Cardiac septum (tissue), 1 donor: ENCODE measurements at regions of chr9 and their contacts with region 1.

Region 1: DNA sequence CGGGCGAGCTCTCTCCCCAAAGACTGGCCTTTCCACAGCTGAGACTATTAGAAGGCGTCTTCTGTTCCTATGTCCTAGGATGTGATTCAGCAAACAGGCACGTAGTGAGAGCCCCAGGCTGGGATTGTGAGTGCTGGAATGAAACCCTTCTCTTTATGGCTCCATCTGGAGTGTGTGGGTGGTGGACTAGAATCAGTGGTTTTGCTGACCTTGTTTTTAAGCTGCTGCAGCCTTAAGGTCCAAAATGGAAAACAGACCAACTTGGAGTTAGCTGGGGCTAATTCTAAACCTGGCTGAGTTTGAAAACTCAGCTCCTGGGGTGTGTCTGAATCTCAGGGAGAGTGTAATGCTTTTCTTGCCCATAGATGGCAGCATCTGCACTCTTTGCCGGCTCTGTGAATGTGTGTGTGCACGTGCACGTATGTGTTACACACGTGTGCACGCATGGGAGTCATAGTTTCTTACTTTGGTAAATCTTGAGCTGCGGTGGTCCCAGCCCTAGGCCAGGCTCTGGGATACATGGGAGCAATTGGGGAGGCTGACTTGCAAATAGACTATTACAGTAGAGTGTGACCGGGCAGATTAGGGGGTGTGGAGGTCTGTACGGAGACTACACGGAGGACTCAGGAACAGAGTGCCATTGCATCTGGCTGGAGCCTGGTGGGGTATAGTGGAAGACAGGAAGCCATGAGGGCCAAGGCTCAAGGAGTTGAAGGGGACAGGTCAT is 10.7 kb downstream of the GSN start:
- DNase-seq: peak; percentile 78

Region 2: GRCh38 chr9:121222524-121223171 is 56.0 kb before region 1 on chr9:
- intact Hi-C with region 1: loop called (anchors 5 kb)
- DNase-seq: no peak

Region 3: DNA sequence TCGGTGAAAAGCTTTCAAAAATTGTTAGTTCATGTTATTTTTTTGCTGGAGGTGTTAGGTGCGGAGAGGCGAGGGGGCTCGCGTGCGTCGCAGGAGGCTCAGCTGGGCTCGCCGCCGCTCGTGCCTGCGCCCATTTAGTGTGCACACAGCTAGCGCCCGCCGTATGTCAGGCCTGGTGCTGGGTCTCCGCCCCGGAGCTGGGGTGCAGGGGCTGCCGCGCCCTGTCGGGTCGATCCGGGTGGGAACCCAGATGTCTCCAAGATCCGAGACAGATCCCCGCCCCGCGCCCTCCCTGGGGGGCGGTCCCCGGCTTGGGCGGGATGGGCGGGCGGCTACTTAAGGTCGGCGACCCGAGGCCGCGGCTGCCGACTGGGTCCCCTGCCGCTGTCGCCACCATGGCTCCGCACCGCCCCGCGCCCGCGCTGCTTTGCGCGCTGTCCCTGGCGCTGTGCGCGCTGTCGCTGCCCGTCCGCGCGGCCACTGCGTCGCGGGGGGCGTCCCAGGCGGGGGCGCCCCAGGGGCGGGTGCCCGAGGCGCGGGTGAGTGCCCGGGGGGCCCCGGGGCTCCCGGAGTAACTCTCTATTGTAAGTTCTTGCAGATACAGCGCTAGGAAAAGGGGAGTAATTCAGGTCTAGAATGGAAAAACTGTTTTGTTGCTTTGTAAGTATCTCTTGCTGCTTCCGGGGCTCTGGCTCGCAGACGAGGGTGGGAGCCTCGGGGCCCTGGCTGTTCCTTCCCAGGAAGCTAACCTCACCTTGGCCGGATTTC is 21.0 kb after region 1 on chr9:
- intact Hi-C with region 1: no loop called
- DNase-seq: peak; percentile 91

Region 4: GRCh38 chr9:121326130-121326838 is 47.6 kb after region 1 on chr9:
- intact Hi-C with region 1: loop called (anchors 1 kb)
- DNase-seq: peak; percentile 93

Region 5: GRCh38 chr9:121369595-121370265 is 91.0 kb after region 1 on chr9 and contains the start of gene STOM:
- intact Hi-C with region 1: loop called (anchors 5 kb)
- DNase-seq: peak; percentile 93
- total RNA-seq, gene STOM: 191 TPM